SK-N-SH (cell line): ENCODE measurements at regions of chr4 and their contacts with region 1.

Region 1: GRCh38 chr4:103099691-103100392 is at the start of gene BDH2:
- DNase-seq: peak; percentile 64
- H3K4me3 ChIP-seq: peak within 1 kb of the TSS; percentile 58 to 62
- H3K27ac ChIP-seq: peak within 1 kb of the TSS; percentile 53 to 79
- H3K4me1 ChIP-seq: peaks cover 7 to 8% of the 10 kb centered on the region in 2 experiments; a peak in 3 of 4 replicates
- H3K27me3 ChIP-seq: no peaks in the 10 kb centered on the region
- CTCF ChIP-seq: peak; percentile 73
- EP300 ChIP-seq: no peak
- RAD21 ChIP-seq: peak; percentile 89
- polyA plus RNA-seq, gene BDH2: 57.8 and 95.4 TPM in 2 replicates

Region 2: DNA sequence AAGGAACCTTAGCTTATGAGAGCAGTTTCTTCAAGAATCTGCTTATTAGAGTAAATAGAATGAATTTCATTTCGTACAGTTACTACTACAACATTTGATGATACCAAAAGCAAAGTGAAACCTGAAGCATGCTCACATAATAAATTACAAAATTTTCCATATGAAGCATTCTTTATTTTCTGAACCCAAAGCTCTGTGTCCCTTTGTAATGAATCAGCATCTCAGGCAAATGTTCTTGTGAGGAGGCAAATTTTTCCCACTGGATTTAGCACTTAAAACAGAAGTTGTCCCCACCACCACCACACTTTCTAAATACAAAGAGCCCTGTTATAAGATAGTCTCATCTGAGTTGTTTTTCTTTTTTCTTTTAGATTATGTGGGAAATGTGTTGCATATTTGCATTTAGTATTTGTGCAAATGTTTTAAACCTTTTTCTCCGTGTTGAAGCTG is 669.4 kb before region 1 on chr4:
- CTCF ChIA-PET with region 1: interaction called, 14 read pairs
- POLR2A ChIA-PET with region 1: no interaction called
- DNase-seq: no peak
- H3K4me3 ChIP-seq: peak overlapping the region; percentile 54 to 80
- H3K27ac ChIP-seq: peak overlapping the region; percentile 24 to 77; a peak in 3 of 4 replicates
- H3K4me1 ChIP-seq: peaks cover 0 to 10% of the 10 kb centered on the region in 2 experiments; a peak in 2 of 4 replicates
- H3K27me3 ChIP-seq: no peaks in the 10 kb centered on the region
- CTCF ChIP-seq: no peak
- EP300 ChIP-seq: no peak
- RAD21 ChIP-seq: no peak

Region 3: DNA sequence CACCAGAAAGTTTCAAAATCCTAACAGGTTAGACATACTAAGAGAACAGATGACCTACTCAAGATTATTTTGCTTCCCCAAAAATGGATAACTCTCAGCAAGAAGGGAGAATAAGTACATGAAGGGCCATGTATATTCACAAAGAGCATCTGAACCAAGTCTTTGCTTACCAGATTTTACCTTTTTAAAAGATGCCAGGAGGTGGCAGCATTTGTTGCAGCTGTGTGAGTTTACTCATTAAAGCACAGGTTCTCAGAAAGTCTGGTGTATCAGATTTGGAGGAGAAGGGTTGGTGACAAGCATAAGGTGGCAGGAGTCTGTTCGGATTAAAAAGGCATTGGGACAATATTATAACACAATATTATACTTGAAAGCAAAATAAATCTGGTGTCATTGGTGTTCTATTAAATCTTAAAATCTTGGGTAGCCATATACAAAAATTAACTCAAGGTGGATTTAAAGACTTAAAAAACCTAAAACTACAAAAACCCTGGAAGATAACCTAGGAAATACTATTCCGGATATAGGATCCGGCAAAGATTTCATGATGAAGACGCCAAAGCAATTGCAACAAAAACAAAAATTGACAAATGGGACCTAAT is 650.0 kb before region 1 on chr4:
- CTCF ChIA-PET with region 1: interaction called, 13 read pairs
- POLR2A ChIA-PET with region 1: no interaction called
- DNase-seq: peak; percentile 41
- H3K4me3 ChIP-seq: no peak overlapping the region
- H3K27ac ChIP-seq: no peak overlapping the region
- H3K4me1 ChIP-seq: no peaks in the 10 kb centered on the region
- H3K27me3 ChIP-seq: no peaks in the 10 kb centered on the region
- CTCF ChIP-seq: peak; percentile 73
- EP300 ChIP-seq: no peak
- RAD21 ChIP-seq: peak; percentile 91

Region 4: GRCh38 chr4:102620697-102621497 is 478.9 kb before region 1 on chr4:
- CTCF ChIA-PET with region 1: interaction called, 10 read pairs
- POLR2A ChIA-PET with region 1: no interaction called
- DNase-seq: peak; percentile 33
- H3K4me3 ChIP-seq: peak overlapping the region; percentile 26 to 37; a peak in 2 of 4 replicates
- H3K27ac ChIP-seq: peak overlapping the region; percentile 54 to 58; a peak in 3 of 4 replicates
- H3K4me1 ChIP-seq: peaks cover 0 to 8% of the 10 kb centered on the region in 2 experiments; a peak in 2 of 4 replicates
- H3K27me3 ChIP-seq: no peaks in the 10 kb centered on the region
- CTCF ChIP-seq: peak; percentile 70
- EP300 ChIP-seq: no peak
- RAD21 ChIP-seq: peak; percentile 75

Region 5: DNA sequence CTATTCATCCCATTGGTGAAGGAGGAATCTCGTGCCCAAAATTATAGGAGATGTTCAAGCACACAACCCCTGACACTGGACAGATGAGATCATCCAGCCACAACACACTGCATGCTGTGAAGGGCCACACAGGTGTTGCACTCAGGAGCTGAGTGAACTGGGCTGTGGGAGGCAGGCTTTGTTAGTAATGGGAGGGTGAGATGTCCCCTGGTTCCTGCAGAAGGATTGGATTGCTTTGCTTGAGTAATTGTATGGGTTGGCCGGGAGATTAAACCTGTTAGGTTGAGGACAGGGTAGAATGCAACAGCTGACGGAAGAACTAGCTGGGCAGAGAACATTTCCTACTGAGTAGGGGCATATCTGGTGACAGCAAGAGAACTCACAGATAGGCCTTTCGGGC is 467.7 kb after region 1 on chr4:
- CTCF ChIA-PET with region 1: no interaction called
- POLR2A ChIA-PET with region 1: no interaction called
- DNase-seq: no peak
- H3K4me3 ChIP-seq: no peak overlapping the region
- H3K27ac ChIP-seq: no peak overlapping the region
- H3K4me1 ChIP-seq: no peaks in the 10 kb centered on the region
- H3K27me3 ChIP-seq: no peaks in the 10 kb centered on the region
- CTCF ChIP-seq: no peak
- EP300 ChIP-seq: no peak
- RAD21 ChIP-seq: no peak